Activated CD4-positive, alpha-beta T cell treated with anti-CD3 and anti-CD28 coated beads, Interleukin-2, amount 10 ng/mL, durations not matched to agents 7 days and 5 days (primary cell): ENCODE measurements at regions of chr4 and their contacts with region 1.

Region 1: DNA sequence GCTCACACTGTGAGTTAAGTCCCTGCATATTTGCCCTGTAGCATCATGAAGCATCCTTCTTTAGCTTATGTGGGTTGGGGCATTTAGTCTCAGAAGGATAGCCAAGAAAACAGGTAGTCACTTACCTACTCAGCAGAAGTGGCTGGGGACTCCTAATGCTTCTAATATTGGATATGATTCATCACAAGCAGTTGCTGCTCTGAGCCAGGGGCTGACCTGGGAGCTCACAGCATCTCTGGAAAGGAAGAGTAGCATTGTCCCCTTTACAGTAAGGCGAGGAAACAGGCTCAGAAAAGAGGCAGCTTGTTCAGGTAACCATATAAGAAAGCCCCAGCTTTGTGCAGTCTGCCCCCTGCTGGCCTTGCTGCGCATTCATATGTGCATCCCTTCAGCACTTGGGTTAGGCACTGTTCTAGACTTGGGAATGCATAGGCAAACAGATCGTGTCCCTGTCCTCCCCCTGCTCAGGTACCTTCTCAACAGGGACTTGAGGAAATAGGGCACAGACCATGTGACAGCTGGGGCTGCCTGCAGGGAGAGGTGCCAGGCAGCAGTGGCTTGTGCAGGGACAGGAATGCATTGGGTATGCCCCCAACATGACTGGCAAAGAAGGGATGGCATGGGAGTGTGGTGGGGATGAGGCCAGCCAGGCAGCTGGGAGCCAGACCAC is 35.7 kb upstream of the TBC1D14 start:
- DNase-seq: peak; percentile 87
- H3K4me3 Mint-ChIP-seq: no peak overlapping the region
- H3K27ac Mint-ChIP-seq: no peak overlapping the region
- H3K4me1 Mint-ChIP-seq: peaks cover 9% of the 10 kb centered on the region
- H3K27me3 Mint-ChIP-seq: no peaks in the 10 kb centered on the region

Region 2: DNA sequence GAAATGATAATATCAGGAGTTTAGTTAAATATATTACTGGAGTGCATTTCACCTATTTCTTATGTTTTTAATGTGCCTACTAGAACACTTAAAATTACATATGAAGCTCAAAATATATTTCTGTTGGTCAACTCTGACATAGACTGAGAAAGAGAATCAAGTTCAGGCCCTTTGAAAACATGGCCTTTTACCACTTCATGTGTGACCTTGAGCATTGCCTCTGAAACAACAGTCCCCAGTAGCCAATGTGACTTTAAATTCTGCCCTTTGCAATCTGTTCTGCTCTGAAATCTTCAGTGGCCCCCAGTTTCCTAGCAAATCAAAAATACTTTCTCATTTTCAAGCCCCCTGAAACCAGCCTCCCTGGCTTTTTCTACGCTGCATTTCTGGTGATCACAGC is 14.4 kb before region 1 on chr4:
- CTCF ChIA-PET with region 1: interaction called, 14 read pairs
- POLR2A ChIA-PET with region 1: no interaction called
- DNase-seq: no peak
- H3K4me3 Mint-ChIP-seq: no peak overlapping the region
- H3K27ac Mint-ChIP-seq: no peak overlapping the region
- H3K4me1 Mint-ChIP-seq: peaks cover 7% of the 10 kb centered on the region
- H3K27me3 Mint-ChIP-seq: no peaks in the 10 kb centered on the region

Region 3: DNA sequence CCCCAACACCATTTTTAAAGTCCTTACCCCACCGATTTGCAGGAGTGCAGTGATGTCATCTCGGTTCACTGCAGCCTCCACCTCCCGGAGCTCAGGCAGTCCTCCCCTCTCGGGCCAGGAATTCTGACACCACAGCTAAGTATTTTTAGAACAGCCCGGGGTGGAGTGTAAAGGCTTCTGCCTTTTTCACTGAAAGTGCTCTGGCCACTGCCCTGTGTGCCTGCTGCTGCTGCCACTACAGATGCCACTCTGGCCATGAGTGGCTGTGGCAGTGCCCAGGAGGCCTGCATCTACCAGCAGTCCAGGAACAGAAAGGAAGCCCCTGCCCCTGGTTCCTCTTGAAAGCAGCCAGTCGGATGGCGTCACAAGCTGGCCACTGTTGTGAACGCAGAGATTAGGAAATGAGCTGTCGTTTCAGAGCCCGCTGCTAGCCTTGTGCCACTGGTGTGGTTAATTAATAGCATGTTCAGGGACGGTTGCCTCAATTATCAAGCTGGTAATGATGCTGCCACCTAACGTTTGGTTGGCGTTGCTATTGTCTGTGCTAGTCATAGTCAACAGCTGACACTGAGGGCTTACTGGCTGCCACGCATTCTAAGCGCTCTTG is 12.1 kb after region 1 on chr4:
- CTCF ChIA-PET with region 1: interaction called, 40 read pairs
- POLR2A ChIA-PET with region 1: no interaction called
- DNase-seq: no peak
- H3K4me3 Mint-ChIP-seq: no peak overlapping the region
- H3K27ac Mint-ChIP-seq: peak overlapping the region; percentile 19
- H3K4me1 Mint-ChIP-seq: no peaks in the 10 kb centered on the region
- H3K27me3 Mint-ChIP-seq: no peaks in the 10 kb centered on the region

Region 4: DNA sequence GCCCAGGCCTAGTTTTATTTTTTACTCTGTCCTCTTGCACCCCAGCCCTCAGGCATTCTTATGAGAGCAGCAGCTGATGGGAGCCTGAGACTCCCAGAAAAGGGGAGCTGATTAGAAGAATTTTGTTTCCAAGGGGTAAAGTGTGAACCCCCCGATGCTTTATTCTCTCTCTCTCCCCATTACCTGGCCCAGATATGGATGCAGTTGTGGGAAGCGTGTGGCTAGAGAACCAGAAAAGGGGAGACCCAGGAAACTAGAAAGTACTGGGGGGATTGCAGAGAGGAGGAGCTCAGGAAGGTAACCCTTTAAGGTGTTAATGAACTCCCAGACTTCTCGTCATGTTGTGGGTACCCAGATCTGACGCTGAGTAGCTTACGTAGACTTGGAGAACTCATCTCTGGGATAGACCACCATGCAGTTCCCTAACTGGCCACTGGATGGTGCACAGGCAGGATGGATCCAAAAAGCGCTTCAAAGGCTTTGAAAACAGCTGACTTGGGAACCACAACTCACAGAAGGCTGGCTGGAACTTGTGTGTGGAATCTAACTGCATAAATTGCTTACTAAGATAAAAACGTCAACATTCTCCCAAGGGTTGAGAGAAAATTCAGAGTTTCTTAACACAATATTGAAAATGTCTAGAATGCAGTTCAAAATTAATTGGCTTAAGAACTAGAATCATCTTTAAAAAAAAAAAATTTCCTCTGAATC is 100.4 kb after region 1 on chr4:
- CTCF ChIA-PET with region 1: no interaction called
- POLR2A ChIA-PET with region 1: no interaction called
- DNase-seq: peak; percentile 87
- H3K4me3 Mint-ChIP-seq: no peak overlapping the region
- H3K27ac Mint-ChIP-seq: no peak overlapping the region
- H3K4me1 Mint-ChIP-seq: peaks cover 19% of the 10 kb centered on the region
- H3K27me3 Mint-ChIP-seq: no peaks in the 10 kb centered on the region